ENCODE measurements at regions of chr6 and their contacts with region 1.

Region 1: DNA sequence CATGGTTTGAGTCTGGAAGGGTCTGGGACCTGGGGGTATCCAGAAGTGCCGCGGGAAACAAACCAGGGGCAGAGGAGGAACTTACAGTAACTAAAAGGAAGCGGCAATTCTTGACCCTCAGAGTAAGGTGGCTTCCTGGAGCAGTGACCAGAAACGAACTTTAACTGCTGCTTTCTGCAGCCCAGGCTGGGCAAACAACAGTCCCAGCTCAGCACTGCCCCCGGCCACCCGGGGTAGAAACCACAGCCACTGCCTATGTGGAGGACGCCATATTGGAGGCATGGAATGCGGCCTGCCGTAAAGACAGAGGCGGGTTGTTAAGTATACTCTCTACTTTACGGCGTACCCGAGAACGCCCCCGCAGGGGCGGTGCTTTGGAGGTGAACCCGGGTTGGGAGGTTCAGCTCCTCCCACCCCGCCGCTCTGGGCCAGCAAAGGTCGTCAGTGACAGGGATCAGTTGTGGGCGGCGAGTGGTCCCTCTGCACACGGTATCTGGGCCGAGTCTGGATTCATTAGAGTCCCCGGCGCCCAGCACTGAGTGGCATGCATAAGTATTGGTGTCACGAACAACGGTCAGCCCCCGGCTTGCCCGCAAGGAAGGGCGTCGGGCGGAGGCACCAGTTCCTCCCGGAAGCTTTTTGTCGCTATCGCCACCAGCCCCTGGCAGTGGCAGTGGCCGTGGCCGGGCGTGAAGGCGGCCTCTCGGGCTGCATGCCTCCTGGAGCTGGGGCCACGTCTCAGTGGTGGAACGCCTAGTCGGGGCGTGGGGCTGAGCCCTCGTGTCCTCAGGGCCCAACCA is at the start of gene PDSS2:
- DNase-seq: peak; percentile 96
- ATAC-seq: peak; percentile 98
- H3K4me3 ChIP-seq: peak within 1 kb of the TSS; percentile 89 to 98
- H3K27ac ChIP-seq: peak within 1 kb of the TSS; percentile 96
- H3K4me1 ChIP-seq: peaks cover 15% of the 10 kb centered on the region
- H3K27me3 ChIP-seq: no peaks in the 10 kb centered on the region
- CTCF ChIP-seq: peak; percentile 84
- total RNA-seq, gene PDSS2: 17.7 TPM

Region 2: DNA sequence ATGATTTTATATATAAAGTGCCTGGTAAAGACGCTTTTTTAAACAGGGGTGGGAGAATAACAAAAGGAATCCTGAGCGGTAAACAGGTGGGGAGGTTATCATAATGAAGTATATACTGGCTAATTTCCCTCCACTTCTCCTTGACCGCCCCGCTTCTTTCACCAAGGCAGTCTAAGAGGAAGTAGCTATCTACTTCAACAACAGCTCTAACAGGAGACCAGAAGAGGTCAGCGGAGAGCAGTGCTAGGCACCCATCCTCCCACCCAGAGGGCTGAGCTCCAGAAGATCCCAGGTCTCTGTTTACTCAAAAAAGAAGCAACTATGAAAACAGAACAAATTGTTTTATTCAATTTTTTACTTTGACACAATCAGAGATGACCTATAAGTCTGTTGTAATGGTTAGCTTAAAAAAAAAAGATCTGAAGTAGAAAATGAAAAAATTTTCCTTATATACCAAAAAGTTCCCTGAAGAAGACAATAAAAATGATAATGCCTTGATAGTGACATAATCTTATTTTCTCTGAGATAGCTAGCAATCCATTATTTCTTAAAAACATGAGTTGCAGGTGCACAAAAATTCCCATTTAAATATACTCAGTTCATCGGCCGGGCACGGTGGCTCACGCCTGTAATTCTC is 141.3 kb before region 1 on chr6:
- CTCF ChIA-PET with region 1: interaction called, 12 read pairs
- POLR2A ChIA-PET with region 1: interaction called, 8 read pairs
- in situ Hi-C with region 1: no loop called
- intact Hi-C with region 1: no loop called
- DNase-seq: peak; percentile 42
- ATAC-seq: peak; percentile 100
- H3K4me3 ChIP-seq: no peak overlapping the region
- H3K27ac ChIP-seq: no peak overlapping the region
- H3K4me1 ChIP-seq: peaks cover 5% of the 10 kb centered on the region; the same call in 1 of the 2 replicates
- H3K27me3 ChIP-seq: no peaks in the 10 kb centered on the region
- CTCF ChIP-seq: peak; percentile 94

Region 3: DNA sequence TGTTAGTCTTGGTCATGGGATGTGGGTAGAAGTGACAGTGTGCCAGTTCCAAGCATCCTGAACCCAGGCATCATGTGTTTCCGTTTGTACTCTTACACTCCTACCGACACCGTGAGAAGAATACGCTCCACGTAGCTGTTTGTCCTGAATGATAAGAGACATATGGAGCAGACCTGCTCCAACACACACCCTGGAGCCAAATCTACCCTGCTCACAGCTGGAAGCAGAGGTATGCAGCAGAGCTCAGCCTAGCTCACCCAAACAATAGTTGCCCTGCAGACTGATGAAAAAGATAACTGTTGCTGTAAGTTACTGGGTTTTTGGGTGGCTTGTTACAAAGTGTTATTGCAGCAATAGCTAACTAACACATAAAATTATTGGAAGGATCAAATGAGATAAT is 14.2 kb after region 1 on chr6:
- CTCF ChIA-PET with region 1: no interaction called
- POLR2A ChIA-PET with region 1: no interaction called
- in situ Hi-C with region 1: no loop called
- intact Hi-C with region 1: no loop called
- DNase-seq: no peak
- ATAC-seq: peak; percentile 68
- H3K4me3 ChIP-seq: no peak overlapping the region
- H3K27ac ChIP-seq: no peak overlapping the region
- H3K4me1 ChIP-seq: no peaks in the 10 kb centered on the region
- H3K27me3 ChIP-seq: peaks cover 3% of the 10 kb centered on the region; the same call in 1 of the 2 replicates
- CTCF ChIP-seq: no peak

Measured in Panc1 (cell line).